Panc1 (cell line): ENCODE measurements at regions of chr10 and their contacts with region 1.

Region 1: DNA sequence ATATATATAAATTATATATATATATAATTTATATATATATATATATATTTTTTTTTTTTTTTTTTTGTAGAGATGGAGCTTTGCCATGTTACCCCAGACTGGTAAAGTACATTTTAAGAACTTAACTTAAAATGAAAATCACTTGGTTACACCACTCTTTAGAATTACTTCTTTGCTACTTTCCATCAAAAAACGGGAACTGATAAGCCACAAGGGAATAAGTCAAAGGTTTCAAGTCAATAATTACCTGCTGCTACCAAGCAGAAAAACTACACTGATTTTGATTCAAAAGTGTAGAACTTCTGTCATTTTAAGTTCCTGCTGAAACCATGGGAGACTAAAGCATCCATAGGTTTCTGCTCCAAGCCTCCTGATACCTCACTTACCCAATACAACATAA is 12.2 kb downstream of the PPA1 start:
- DNase-seq: no peak
- ATAC-seq: no peak
- H3K4me3 ChIP-seq: no peak overlapping the region
- H3K27ac ChIP-seq: 0 out of 2 replicates have a peak overlapping the region, but pooled peaks have one; percentile 5
- H3K4me1 ChIP-seq: peaks cover 5% of the 10 kb centered on the region
- H3K27me3 ChIP-seq: no peaks in the 10 kb centered on the region
- CTCF ChIP-seq: no peak

Region 2: DNA sequence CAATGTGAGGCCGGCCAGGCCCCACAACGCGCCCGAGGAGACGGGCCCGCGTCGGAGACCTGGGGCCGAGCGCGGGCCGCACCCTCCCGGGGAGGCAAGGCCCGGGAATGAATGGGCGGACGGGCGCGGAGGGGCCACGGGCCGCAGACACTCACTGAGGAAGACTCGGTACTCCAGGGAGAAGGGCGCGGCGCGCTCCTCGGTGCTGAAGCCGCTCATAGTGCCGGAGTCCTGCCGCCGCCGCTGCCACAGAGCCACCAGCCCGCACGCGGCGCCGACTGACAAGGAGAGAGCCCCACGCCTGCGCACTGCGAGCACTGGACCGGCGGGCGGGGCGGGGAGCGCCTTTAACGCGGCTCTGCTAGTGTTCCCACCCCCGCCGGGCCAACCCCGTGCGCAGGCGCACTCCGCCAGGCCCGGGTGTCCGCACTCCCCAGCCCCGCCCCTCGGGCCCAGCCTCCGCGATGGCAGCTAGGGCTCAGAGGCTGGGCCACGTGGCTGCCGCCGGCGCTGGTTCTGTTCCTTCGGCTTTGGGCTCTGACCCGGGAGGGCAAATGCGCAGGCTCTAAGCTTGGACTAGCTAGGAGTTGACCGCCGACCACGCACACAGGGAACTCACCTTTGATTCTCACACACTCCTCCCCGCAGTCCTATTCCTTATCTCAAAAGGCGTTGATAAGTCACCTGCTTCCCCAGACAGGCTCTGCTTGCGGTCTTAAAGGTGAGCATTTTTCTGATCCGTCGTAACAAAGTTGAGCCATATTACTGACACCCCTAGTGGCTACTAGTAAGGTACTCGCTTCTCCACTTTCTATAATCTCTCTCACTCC is 12.3 kb after region 1 on chr10 and contains the start of gene PPA1:
- CTCF ChIA-PET with region 1: interaction called, 14 read pairs
- POLR2A ChIA-PET with region 1: interaction called, 6 read pairs
- in situ Hi-C with region 1: no loop called
- intact Hi-C with region 1: no loop called
- DNase-seq: peak; percentile 84
- ATAC-seq: peak; percentile 98
- H3K4me3 ChIP-seq: peak within 1 kb of the TSS; percentile 90 to 98
- H3K27ac ChIP-seq: peak within 1 kb of the TSS; percentile 96
- H3K4me1 ChIP-seq: peaks cover 12% of the 10 kb centered on the region
- H3K27me3 ChIP-seq: no peaks in the 10 kb centered on the region
- CTCF ChIP-seq: no peak
- total RNA-seq, gene PPA1: 174 TPM

Region 3: DNA sequence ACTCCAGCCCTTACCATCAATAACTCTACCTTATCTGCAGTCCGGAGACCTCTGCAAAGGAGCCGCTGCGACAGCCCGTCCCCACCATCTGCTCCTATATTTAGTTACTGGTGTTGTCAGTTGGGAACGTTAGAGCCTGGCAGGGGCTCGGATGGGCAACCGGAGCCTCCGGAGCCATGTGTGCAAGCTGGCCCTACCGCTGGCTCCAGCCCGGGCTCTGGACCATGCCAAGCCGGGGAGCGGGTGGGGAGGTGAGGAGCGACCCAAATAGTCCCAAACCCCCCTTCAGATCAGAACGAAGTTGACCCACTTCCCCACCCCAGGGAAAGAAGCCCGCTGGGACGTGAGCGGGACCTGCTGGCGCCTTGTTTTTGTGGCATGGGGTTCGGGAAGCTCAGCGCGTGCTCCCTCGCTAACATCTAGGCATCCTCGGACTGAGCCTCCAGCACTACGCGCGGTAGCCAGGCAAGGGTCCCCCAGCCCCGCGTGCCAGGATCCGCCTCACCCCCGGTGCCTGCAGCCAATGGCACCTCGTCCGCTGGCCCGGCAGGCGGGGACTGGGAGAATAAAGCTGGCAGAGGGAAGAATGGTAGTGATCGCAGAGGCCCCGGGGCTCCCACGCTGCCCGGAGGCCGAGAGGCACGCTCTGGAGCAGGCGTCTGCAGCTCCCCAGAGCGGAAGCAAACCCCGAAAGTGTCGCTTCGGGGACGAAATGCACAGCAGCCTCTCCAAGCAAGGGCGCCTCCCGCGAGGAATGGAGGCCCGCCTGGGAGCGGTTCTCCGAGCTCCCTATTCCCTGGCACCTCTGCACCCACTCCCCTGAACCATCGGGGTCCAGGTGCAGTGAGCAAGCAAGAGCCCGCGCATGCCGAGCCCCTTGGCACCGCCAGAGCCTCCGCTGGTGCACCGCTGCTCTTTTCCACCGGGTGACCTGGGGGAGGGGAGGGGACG is 160.7 kb after region 1 on chr10:
- CTCF ChIA-PET with region 1: interaction called, 21 read pairs
- POLR2A ChIA-PET with region 1: no interaction called
- in situ Hi-C with region 1: no loop called
- intact Hi-C with region 1: no loop called
- DNase-seq: no peak
- ATAC-seq: peak; percentile 45
- H3K4me3 ChIP-seq: peak overlapping the region; percentile 89 to 95
- H3K27ac ChIP-seq: peak overlapping the region; percentile 86
- H3K4me1 ChIP-seq: peaks cover 43% of the 10 kb centered on the region
- H3K27me3 ChIP-seq: no peaks in the 10 kb centered on the region
- CTCF ChIP-seq: no peak

Region 4: GRCh38 chr10:70418229-70418628 is 197.2 kb after region 1 on chr10:
- CTCF ChIA-PET with region 1: no interaction called
- POLR2A ChIA-PET with region 1: no interaction called
- in situ Hi-C with region 1: no loop called
- intact Hi-C with region 1: no loop called
- DNase-seq: no peak
- ATAC-seq: peak; percentile 53; the same call in 1 of the 2 replicates
- H3K4me3 ChIP-seq: no peak overlapping the region
- H3K27ac ChIP-seq: no peak overlapping the region
- H3K4me1 ChIP-seq: no peaks in the 10 kb centered on the region
- H3K27me3 ChIP-seq: no peaks in the 10 kb centered on the region
- CTCF ChIP-seq: no peak